WTC11 (cell line): ENCODE measurements at regions of chr10 and their contacts with region 1.

Region 1: DNA sequence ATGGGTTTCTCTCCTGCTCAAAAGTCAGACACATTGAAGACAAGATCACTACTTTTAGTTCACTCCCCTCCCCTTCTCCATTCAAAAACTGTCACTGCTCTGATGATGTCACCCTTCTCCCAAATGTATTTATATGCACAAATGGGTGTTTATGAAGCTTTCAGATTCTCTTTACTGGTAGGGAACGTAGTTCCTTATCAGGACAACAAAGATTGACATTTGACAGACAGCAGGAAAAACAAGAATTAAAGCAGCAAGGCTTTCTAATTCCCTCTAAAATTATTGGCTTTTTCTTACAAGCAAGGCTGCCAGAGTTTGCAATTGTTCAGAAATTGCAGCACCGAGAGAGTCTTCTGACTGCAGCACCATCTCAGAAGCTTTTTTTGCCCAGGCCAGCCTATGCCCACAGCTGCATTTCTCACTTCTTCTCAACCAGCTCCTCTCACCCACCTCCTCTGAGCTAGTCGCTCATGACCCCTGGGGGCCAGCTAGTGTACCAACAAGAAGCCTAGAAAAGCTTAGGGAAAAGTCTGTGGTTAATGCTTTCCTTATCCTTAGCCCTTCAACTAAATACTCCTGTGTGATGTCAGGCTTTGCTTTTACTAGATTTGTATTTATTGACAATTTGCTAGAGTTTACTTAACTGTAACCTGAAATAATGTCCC is 265.1 kb downstream of the HTR7 start:
- DNase-seq: peak; percentile 74
- ATAC-seq: peak; percentile 99
- H3K4me3 Mint-ChIP-seq: no peak overlapping the region
- H3K27ac Mint-ChIP-seq: no peak overlapping the region
- H3K4me1 Mint-ChIP-seq: peaks cover 20% of the 10 kb centered on the region
- H3K27me3 Mint-ChIP-seq: no peaks in the 10 kb centered on the region
- CTCF ChIP-seq: peak; percentile 64

Region 2: GRCh38 chr10:90148116-90148855 is 444.5 kb before region 1 on chr10:
- CTCF ChIA-PET with region 1: interaction called, 26 read pairs
- POLR2A ChIA-PET with region 1: no interaction called
- DNase-seq: no peak
- ATAC-seq: peak; percentile 75
- H3K4me3 Mint-ChIP-seq: no peak overlapping the region
- H3K27ac Mint-ChIP-seq: no peak overlapping the region
- H3K4me1 Mint-ChIP-seq: peaks cover 18% of the 10 kb centered on the region
- H3K27me3 Mint-ChIP-seq: no peaks in the 10 kb centered on the region
- CTCF ChIP-seq: peak; percentile 36; the same call in 1 of the 2 replicates

Region 3: DNA sequence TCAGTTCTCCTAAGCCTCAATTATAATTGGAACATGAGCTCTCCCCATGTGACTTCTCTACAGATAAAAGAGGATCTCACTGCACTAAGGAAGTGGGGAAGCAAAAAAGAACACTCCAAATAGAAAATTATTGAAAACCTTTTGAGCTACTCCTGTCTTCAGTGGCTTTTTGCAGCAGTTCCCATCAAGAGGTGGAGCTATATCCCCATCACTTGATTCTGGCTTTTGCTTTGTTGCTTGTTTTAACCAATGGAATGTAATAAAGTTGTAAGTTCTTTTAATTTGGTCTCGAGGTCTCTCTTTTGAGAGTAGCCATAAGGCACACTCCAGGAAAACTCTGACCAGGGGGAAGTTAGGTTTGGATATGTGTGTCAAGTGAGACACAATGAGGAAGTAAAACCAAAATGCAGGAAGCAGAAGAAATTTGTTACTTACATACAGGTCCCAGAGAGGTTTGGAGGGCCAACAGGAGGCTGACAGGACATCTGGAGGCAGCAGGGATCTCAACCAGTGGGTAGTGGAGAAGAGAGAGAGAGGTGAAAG is 304.3 kb before region 1 on chr10:
- CTCF ChIA-PET with region 1: interaction called, 64 read pairs
- POLR2A ChIA-PET with region 1: no interaction called
- DNase-seq: no peak
- ATAC-seq: peak; percentile 76
- H3K4me3 Mint-ChIP-seq: no peak overlapping the region
- H3K27ac Mint-ChIP-seq: no peak overlapping the region
- H3K4me1 Mint-ChIP-seq: peaks cover 32% of the 10 kb centered on the region
- H3K27me3 Mint-ChIP-seq: no peaks in the 10 kb centered on the region
- CTCF ChIP-seq: no peak

Region 4: GRCh38 chr10:90642136-90642535 is 49.4 kb after region 1 on chr10:
- CTCF ChIA-PET with region 1: no interaction called
- POLR2A ChIA-PET with region 1: no interaction called
- DNase-seq: no peak
- ATAC-seq: no peak
- H3K4me3 Mint-ChIP-seq: no peak overlapping the region
- H3K27ac Mint-ChIP-seq: no peak overlapping the region
- H3K4me1 Mint-ChIP-seq: peaks cover 29% of the 10 kb centered on the region
- H3K27me3 Mint-ChIP-seq: no peaks in the 10 kb centered on the region
- CTCF ChIP-seq: no peak